AG04449 (cell line): ENCODE measurements at regions of chr6 and their contacts with region 1.

Region 1: DNA sequence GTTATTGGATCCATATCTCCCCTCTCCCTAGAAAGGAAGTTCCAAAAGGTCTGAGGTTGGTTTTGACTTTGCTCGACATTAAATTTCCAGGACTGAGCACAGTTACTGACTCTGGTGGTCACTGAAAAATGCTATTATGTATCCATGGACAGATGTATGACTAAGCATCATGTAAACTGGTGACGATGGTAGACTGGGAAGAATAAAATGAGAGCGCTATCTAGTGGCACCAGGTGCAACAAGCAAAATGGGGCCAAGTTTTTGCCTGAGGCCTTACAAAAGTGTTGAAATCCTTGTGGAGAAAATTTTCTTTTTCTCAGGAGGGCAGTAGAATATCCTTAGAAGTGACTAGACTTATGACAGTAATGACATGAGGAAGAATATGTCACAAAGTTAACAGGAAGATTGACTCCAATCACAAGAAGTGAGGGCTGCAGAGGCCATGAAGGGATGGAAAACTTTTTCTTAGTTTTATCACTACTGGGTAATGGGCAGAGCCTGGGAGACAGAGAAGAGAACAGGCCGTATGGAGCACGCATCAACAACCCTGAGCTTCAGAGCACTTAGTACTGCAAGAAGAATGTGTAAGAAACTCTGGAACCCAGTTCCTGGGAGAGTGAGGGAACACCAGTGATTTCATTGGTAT is 88.9 kb upstream of the ELOVL5 start:
- DNase-seq: no peak
- H3K4me3 ChIP-seq: no peak overlapping the region
- CTCF ChIP-seq: peak; percentile 46

Region 2: DNA sequence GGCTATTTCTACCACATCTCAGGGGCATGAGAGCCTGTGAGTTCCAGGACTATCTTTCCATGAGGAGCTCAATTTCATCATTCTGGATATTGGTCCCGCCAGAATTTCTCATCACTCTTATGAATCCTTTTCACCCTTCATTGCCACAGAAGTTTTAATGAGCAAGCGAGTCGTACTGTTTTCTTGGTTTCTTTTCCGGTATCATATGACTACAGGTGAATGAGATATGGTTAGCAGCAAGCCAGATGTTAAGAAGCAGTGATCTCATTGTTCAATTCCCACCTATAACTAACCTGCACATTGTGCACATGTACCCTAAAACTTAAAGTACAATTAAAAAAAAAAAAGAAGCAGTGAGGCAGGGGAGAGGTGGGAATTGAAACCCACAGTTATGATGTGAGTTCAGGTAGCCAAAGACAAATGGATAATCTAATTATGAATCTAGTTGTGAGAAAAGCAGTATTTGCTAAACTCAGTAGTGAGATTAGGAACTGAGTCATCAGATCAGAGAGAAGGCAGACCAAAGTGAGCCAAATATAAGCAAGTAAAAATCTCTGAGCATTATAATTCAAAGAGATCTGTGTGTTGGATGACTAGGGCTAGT is 10.9 kb before region 1 on chr6:
- CTCF ChIA-PET with region 1: interaction called, 28 read pairs
- POLR2A ChIA-PET with region 1: no interaction called
- DNase-seq: no peak
- H3K4me3 ChIP-seq: no peak overlapping the region
- CTCF ChIP-seq: no peak